CD4-positive, alpha-beta memory T cell (primary cell): ENCODE measurements at regions of chr9 and their contacts with region 1.

Region 1: DNA sequence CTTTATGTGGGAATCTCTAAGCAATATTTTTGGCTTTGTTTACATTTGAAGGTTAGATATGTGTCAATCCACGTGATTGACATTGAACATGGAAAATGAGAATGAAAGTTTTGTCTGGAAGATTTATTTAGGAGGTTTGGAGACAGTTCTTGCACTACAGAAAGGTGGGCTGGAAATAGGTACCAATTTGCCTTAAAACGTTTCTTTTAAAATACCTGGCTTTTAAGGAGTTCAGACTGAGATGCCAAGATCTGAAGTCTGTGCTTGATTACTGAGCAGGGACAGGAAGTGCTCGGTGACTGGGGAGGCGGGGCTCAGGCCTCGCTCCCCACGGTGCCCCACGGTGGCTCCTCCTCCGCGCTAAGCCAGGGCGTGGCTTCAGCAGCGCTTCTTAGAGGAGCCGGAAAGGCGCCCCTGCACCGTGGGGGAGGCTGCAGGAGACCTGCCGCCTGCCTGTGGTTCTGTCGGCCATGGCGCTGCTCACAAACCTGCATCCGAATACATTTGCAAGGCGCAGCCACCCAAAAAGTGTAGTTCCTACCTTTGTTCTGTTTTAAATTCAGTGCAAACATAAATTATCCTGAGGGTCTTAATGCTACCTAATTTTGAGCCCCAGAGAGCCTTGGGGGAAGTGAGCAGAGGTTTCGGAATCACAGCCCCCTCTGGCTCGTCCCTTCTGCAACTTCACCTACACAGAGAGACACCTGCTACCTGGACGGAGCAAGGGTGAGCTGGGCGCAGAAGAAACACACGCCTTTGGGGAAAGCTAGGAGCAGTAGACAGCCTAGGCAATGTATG is 49.2 kb downstream of the USP20 start:
- DNase-seq: peak; percentile 93 to 97 (median 95)
- H3K4me3 ChIP-seq: peak overlapping the region; percentile 78 to 80
- H3K4me3 Mint-ChIP-seq: peak overlapping the region; percentile 90 to 98 (median 94)
- H3K27ac ChIP-seq: peak overlapping the region; percentile 98
- H3K27ac Mint-ChIP-seq: peak overlapping the region; percentile 99 to 100 (median 100)
- H3K4me1 ChIP-seq: peaks cover 62% of the 10 kb centered on the region
- H3K4me1 Mint-ChIP-seq: peaks cover 26 to 60% (median 40%) of the 10 kb centered on the region in 4 donors
- H3K27me3 ChIP-seq: no peaks in the 10 kb centered on the region
- H3K27me3 Mint-ChIP-seq: no peaks in the 10 kb centered on the region

Region 2: GRCh38 chr9:129436751-129437625 is 447.4 kb before region 1 on chr9:
- CTCF ChIA-PET with region 1: no interaction called
- POLR2A ChIA-PET with region 1: no interaction called
- intact Hi-C with region 1: no loop called
- DNase-seq: peak in 4 of 5 donors; percentile 45 to 49 (median 48)
- H3K4me3 ChIP-seq: peak overlapping the region in 1 of 2 donors; percentile 45
- H3K4me3 Mint-ChIP-seq: peak overlapping the region; percentile 85 to 96 (median 89)
- H3K27ac ChIP-seq: no peak overlapping the region
- H3K27ac Mint-ChIP-seq: peak overlapping the region in 6 of 7 donors; percentile 5 to 87 (median 82)
- H3K4me1 ChIP-seq: peaks cover 20% of the 10 kb centered on the region
- H3K4me1 Mint-ChIP-seq: peaks cover 12 to 43% (median 22%) of the 10 kb centered on the region in 4 donors
- H3K27me3 ChIP-seq: peaks cover 19% of the 10 kb centered on the region
- H3K27me3 Mint-ChIP-seq: peaks cover 32 to 36% of the 10 kb centered on the region in 2 donors

Region 3: DNA sequence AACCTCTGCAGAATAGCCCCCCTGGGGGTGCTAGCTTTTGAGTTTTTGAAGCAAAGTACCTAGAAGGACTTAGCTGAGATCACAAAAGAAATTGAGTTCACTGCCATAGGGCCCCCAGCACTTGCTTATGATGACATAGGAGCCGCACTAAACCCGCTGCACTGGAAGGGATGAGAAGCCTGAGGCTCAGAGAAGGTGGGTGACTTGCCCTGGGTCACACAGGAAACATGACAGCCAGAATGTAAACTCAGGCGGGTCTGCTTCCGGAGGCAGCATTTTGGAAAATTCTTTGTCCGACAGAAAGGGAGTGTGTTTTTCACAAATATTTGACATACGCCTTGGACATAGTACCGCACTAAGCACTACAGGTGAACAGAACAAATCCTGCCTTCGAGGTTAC is 89.9 kb before region 1 on chr9:
- CTCF ChIA-PET with region 1: no interaction called
- POLR2A ChIA-PET with region 1: no interaction called
- intact Hi-C with region 1: no loop called
- DNase-seq: no peak
- H3K4me3 ChIP-seq: no peak overlapping the region
- H3K4me3 Mint-ChIP-seq: no peak overlapping the region
- H3K27ac ChIP-seq: no peak overlapping the region
- H3K27ac Mint-ChIP-seq: no peak overlapping the region
- H3K4me1 ChIP-seq: no peaks in the 10 kb centered on the region
- H3K4me1 Mint-ChIP-seq: peaks cover 5 to 10% (median 6%) of the 10 kb centered on the region in 4 donors
- H3K27me3 ChIP-seq: no peaks in the 10 kb centered on the region
- H3K27me3 Mint-ChIP-seq: peaks cover 2 to 6% of the 10 kb centered on the region in 2 donors

Region 4: DNA sequence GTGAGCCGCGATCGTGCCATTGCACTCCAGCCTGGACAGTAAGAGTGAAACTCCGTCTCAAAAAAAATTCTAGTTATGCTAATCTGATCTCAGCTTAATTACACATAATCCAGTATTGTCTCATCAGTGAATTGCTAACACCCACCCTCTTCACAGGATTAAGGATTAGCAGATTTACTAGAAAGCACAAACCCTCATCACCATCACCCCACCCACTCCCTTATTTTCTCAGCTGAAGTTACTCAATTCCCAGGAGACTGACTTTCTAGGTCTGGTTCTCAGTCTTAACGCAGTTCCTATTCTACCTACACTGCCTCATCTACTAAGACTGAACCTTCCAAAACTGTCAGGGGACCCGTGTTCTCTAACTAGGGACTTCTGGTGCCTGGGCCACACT is 72.5 kb before region 1 on chr9:
- CTCF ChIA-PET with region 1: no interaction called
- POLR2A ChIA-PET with region 1: no interaction called
- intact Hi-C with region 1: no loop called
- DNase-seq: no peak
- H3K4me3 ChIP-seq: no peak overlapping the region
- H3K4me3 Mint-ChIP-seq: no peak overlapping the region
- H3K27ac ChIP-seq: no peak overlapping the region
- H3K27ac Mint-ChIP-seq: peak overlapping the region in 6 of 7 donors; percentile 28 to 76 (median 51)
- H3K4me1 ChIP-seq: peaks cover 7% of the 10 kb centered on the region
- H3K4me1 Mint-ChIP-seq: peaks cover 14 to 35% (median 16%) of the 10 kb centered on the region in 4 donors
- H3K27me3 ChIP-seq: no peaks in the 10 kb centered on the region
- H3K27me3 Mint-ChIP-seq: no peaks in the 10 kb centered on the region

Region 5: GRCh38 chr9:129863059-129863690 is 21.2 kb before region 1 on chr9:
- CTCF ChIA-PET with region 1: interaction called, 34 read pairs
- POLR2A ChIA-PET with region 1: interaction called, 423 read pairs
- intact Hi-C with region 1: no loop called
- DNase-seq: peak; percentile 57 to 87 (median 73)
- H3K4me3 ChIP-seq: peak overlapping the region in 1 of 2 donors; percentile 29
- H3K4me3 Mint-ChIP-seq: peak overlapping the region; percentile 34 to 88 (median 77)
- H3K27ac ChIP-seq: peak overlapping the region; percentile 43
- H3K27ac Mint-ChIP-seq: peak overlapping the region; percentile 85 to 98 (median 93)
- H3K4me1 ChIP-seq: peaks cover 83% of the 10 kb centered on the region
- H3K4me1 Mint-ChIP-seq: peaks cover 42 to 79% (median 64%) of the 10 kb centered on the region in 4 donors
- H3K27me3 ChIP-seq: no peaks in the 10 kb centered on the region
- H3K27me3 Mint-ChIP-seq: no peaks in the 10 kb centered on the region

Region 6: DNA sequence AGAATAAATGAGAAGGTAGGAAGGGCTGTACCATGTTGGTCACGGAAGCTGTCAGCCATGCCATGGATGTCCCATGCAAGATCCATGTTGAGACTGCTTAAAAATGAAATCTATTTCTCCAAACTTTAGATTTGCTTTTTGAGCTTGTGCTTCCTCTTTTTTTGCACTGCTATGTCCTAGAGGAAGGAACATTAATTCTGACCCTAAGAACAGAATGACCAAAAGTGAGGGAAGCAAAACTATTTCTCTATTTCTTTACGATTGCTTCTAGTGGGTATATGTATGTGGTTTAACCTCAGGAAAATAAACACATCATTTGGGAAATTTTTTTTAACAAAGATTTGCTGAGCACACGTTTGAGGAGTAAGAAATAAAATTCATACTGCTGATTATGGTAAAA is 35.4 kb after region 1 on chr9:
- CTCF ChIA-PET with region 1: interaction called, 5 read pairs
- POLR2A ChIA-PET with region 1: interaction called, 26 read pairs
- intact Hi-C with region 1: no loop called
- DNase-seq: no peak
- H3K4me3 ChIP-seq: no peak overlapping the region
- H3K4me3 Mint-ChIP-seq: peak overlapping the region in 5 of 8 donors; percentile 50 to 75 (median 68)
- H3K27ac ChIP-seq: no peak overlapping the region
- H3K27ac Mint-ChIP-seq: peak overlapping the region; percentile 20 to 91 (median 66)
- H3K4me1 ChIP-seq: peaks cover 11% of the 10 kb centered on the region
- H3K4me1 Mint-ChIP-seq: peaks cover 22 to 65% (median 29%) of the 10 kb centered on the region in 4 donors
- H3K27me3 ChIP-seq: no peaks in the 10 kb centered on the region
- H3K27me3 Mint-ChIP-seq: no peaks in the 10 kb centered on the region

Region 7: GRCh38 chr9:129954868-129955550 is 70.6 kb after region 1 on chr9:
- CTCF ChIA-PET with region 1: interaction called, 4 read pairs
- POLR2A ChIA-PET with region 1: interaction called, 37 read pairs
- intact Hi-C with region 1: no loop called
- DNase-seq: no peak
- H3K4me3 ChIP-seq: no peak overlapping the region
- H3K4me3 Mint-ChIP-seq: peak overlapping the region in 7 of 8 donors; percentile 4 to 80 (median 36)
- H3K27ac ChIP-seq: no peak overlapping the region
- H3K27ac Mint-ChIP-seq: peak overlapping the region; percentile 34 to 87 (median 83)
- H3K4me1 ChIP-seq: peaks cover 33% of the 10 kb centered on the region
- H3K4me1 Mint-ChIP-seq: peaks cover 22 to 53% (median 33%) of the 10 kb centered on the region in 4 donors
- H3K27me3 ChIP-seq: no peaks in the 10 kb centered on the region
- H3K27me3 Mint-ChIP-seq: no peaks in the 10 kb centered on the region

Region 8: GRCh38 chr9:130042833-130043653 is 158.6 kb after region 1 on chr9 and contains the start of gene FNBP1:
- CTCF ChIA-PET with region 1: interaction called, 38 read pairs
- POLR2A ChIA-PET with region 1: interaction called, 392 read pairs
- intact Hi-C with region 1: loop called (anchors 1 kb)
- DNase-seq: peak; percentile 82 to 88 (median 84)
- H3K4me3 ChIP-seq: peak within 1 kb of the TSS; percentile 89
- H3K4me3 Mint-ChIP-seq: peak within 1 kb of the TSS; percentile 98 to 100 (median 99)
- H3K27ac ChIP-seq: peak within 1 kb of the TSS; percentile 95
- H3K27ac Mint-ChIP-seq: peak within 1 kb of the TSS; percentile 96 to 99 (median 99)
- H3K4me1 ChIP-seq: peaks cover 41% of the 10 kb centered on the region
- H3K4me1 Mint-ChIP-seq: peaks cover 32 to 69% (median 43%) of the 10 kb centered on the region in 4 donors
- H3K27me3 ChIP-seq: no peaks in the 10 kb centered on the region
- H3K27me3 Mint-ChIP-seq: no peaks in the 10 kb centered on the region
- total RNA-seq, gene FNBP1: 197 to 202 TPM

Region 9: DNA sequence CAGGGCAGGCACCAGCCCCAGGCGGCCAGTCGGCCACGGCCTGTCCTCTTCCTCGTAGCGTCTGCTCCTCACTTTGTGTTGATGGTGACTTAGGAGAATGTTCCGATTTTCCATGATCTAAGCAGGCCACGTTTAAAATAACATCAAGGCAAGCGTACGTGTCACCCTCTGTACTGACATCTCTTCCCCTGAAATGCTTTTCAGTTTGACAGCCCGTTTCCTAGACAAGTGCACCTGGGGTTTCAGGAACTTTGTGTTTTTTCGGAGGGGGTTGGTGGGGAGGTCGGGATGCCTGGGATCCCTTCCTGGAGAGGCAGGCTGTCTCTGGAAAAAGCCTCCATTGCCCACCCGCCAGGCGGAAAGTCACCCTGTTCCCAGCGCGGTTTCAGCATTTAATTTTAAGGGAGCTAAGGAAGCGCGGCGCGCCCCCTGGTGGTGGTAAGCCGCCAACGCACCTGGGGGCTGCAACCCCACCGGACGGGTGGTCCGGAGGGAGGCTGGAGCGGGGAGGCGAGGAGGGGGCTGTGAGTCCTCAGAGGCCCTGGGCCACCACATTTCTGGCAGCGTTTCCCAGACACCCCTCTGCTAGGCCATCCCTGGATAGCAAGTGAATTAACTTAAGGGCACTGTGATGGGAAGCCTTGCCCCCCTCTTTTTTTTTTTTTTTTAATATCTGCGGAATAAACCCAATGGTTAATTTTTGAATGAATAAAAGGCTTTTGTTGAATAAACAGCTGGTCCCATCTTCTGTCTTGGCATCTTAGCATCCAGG is 351.7 kb after region 1 on chr9:
- CTCF ChIA-PET with region 1: interaction called, 5 read pairs
- POLR2A ChIA-PET with region 1: interaction called, 3 read pairs
- intact Hi-C with region 1: loop called (anchors 2 kb)
- DNase-seq: peak in 4 of 5 donors; percentile 55 to 70 (median 60)
- H3K4me3 ChIP-seq: no peak overlapping the region
- H3K4me3 Mint-ChIP-seq: peak overlapping the region in 3 of 8 donors; percentile 29 to 55 (median 46)
- H3K27ac ChIP-seq: no peak overlapping the region
- H3K27ac Mint-ChIP-seq: peak overlapping the region in 3 of 7 donors; percentile 27 to 84 (median 57)
- H3K4me1 ChIP-seq: peaks cover 28% of the 10 kb centered on the region
- H3K4me1 Mint-ChIP-seq: peaks cover 9 to 43% (median 17%) of the 10 kb centered on the region in 4 donors
- H3K27me3 ChIP-seq: no peaks in the 10 kb centered on the region
- H3K27me3 Mint-ChIP-seq: no peaks in the 10 kb centered on the region

Region 10: GRCh38 chr9:130313103-130313858 is 428.9 kb after region 1 on chr9:
- CTCF ChIA-PET with region 1: no interaction called
- POLR2A ChIA-PET with region 1: no interaction called
- intact Hi-C with region 1: no loop called
- DNase-seq: no peak
- H3K4me3 ChIP-seq: no peak overlapping the region
- H3K4me3 Mint-ChIP-seq: no peak overlapping the region
- H3K27ac ChIP-seq: no peak overlapping the region
- H3K27ac Mint-ChIP-seq: no peak overlapping the region
- H3K4me1 ChIP-seq: no peaks in the 10 kb centered on the region
- H3K4me1 Mint-ChIP-seq: peaks cover 0 to 4% (median 0%) of the 10 kb centered on the region in 4 donors
- H3K27me3 ChIP-seq: no peaks in the 10 kb centered on the region
- H3K27me3 Mint-ChIP-seq: peaks cover 3 to 23% of the 10 kb centered on the region in 2 donors